ENCODE measurements at regions of chr14 and their contacts with region 1.

Region 1: DNA sequence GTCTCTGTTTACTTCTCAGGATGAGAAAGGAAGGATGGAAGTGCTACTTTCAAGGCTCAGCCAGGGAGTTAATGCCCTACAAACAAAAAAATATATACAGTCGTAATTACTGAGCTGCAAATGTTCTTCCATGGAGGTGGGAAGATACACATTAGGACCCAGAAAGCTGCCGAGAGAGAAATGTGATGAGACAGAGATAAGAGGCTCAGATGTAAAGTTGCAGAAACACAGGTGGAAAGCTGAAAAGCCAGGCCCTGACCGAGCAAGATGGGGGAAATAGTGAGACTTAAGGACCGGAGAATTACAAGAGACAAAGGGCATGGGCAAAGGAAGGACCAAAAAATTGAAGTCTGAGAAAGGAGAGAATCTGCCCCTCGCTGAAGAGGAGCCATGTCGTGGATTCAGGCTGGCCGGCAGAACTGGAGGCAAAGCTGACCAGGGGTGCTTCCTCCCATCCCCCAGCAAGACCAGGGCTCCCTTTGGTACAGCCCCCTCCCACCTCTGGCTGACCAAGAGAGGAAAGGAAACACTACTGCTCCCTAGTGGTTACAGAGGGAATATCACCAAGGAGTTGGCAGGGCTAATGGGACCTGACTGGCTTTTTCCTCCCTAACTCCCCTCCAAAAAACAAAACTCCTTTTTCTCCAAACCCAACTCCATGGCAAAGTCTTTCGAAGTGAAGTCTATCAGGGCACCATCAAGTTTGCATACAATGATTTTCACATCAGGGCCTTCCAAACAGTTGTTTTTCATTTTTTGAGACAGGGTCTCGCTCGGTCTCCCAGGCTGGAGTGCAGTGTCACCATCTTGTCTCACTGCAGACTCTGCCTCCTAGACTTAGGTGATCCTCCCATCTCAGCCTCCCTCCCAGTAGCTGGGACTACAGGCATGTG is 12.1 kb downstream of the ZFHX2 start:
- DNase-seq: peak in 2 of 4 donors; percentile 35 to 60
- ATAC-seq: peak; percentile 91
- H3K4me3 ChIP-seq: no peak overlapping the region
- H3K27ac ChIP-seq: no peak overlapping the region
- H3K4me1 ChIP-seq: peaks cover 0 to under 1% of the 10 kb centered on the region in 2 donors
- H3K27me3 ChIP-seq: no peaks in the 10 kb centered on the region
- CTCF ChIP-seq: peak; percentile 74

Region 2: DNA sequence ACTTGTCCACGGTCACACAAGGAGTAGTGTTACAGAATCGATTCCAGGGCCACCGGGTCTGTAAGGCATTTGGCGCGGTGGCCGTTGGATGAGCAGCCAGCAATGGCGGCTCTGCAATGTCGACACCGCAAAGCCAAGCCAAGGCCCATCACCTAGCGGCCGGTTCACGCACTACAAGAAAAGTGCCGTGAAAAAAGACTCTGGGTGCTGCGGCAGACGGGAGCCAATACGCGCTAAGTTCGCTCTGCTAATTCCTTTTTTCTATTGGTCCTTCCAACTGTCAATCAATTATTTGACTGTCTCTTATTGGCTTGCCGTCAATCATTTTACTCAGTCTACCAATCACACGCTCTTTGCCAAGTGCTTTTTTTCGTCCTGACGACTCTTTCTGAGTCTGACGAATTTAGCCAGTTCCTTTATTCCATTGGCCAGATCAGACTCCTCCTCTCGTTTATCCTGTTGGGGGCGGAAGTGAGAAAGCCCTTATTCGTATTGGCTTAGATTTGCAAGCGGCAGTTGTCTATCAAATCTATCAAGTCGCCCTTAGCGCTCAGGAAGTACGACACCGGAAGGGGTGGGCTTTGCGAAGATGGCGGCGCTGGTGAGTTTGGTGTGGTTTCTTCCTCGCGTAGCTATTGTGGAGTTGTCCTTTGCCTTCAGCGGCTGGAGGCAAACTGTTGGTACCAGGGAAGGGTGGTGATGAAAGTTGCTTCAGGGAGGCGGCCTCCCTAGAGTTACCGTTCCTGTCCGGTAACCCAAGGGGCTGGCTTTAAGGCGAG is 70.2 kb before region 1 on chr14 and contains the start of gene NGDN:
- intact Hi-C with region 1: no loop called
- DNase-seq: peak; percentile 92 to 99 (median 96)
- ATAC-seq: peak; percentile 98
- H3K4me3 ChIP-seq: peak within 1 kb of the TSS; percentile 63 to 82
- H3K27ac ChIP-seq: peak within 1 kb of the TSS; percentile 77 to 80
- H3K4me1 ChIP-seq: peaks cover 6 to 16% of the 10 kb centered on the region in 2 donors
- H3K27me3 ChIP-seq: no peaks in the 10 kb centered on the region
- CTCF ChIP-seq: peak; percentile 76 to 92
- polyA plus RNA-seq, gene NGDN: 58.1 to 79.3 (median 61.6) TPM

Region 3: GRCh38 chr14:23483236-23483854 is 56.1 kb before region 1 on chr14:
- intact Hi-C with region 1: loop called in 1 of 2 experiments (anchors 10 kb)
- DNase-seq: no peak
- ATAC-seq: no peak
- H3K4me3 ChIP-seq: no peak overlapping the region
- H3K27ac ChIP-seq: no peak overlapping the region
- H3K4me1 ChIP-seq: no peaks in the 10 kb centered on the region
- H3K27me3 ChIP-seq: no peaks in the 10 kb centered on the region
- CTCF ChIP-seq: no peak